ENCODE measurements at regions of chr12 and their contacts with region 1.

Region 1: DNA sequence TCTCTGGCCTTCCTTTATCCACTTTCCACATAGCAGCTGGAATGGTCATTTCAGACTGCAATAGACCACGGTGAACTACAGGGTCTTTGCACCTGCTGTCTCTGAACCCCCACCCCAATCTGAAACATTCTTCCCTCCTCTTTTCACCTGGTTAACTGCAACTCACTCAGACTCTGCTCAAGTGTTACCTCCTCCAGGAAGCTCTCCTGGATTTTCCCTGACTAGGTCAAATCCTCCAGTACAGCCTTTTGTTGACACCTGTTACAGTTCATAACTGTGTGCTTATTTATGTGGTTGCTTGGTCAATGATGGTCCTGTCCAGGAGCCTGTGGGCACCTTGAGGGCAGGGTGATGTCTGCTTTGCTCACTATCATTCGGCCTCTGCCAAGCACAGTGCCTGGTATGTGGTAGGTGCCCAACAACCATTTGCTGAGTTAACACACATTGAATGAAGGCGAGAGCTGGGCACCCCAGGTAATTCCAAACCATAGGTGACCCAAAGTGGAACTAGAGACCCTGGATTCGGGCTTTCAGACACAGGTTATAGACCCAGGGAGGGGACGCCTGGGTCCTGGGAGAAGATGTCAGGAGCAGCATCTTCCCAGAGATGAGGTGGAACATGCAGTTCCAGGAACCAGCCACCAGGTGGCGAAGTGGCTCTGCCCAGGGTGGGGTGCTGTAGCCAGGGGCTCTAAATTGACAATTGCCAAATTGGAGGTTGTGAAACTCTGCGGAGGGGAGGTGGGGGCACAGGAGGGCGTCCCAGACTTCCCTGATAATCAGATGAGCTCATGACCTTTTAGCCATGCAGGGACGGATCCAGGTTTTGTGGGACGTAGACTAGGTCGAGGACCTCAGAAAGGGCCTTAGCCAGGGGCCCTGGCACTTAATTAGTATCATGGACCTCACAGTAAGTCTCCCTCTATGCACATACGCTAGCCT is 28.1 kb downstream of the TRPV4 start:
- DNase-seq: peak; percentile 47 to 82 (median 72)
- ATAC-seq: peak; percentile 96
- H3K4me3 ChIP-seq: no peak overlapping the region
- H3K4me3 Mint-ChIP-seq: no peak overlapping the region
- H3K27ac ChIP-seq: no peak overlapping the region
- H3K27ac Mint-ChIP-seq: no peak overlapping the region
- H3K4me1 ChIP-seq: no peaks in the 10 kb centered on the region
- H3K4me1 Mint-ChIP-seq: no peaks in the 10 kb centered on the region
- H3K27me3 ChIP-seq: peaks cover 0 to 2% of the 10 kb centered on the region in 2 experiments
- H3K27me3 Mint-ChIP-seq: peaks cover 2% of the 10 kb centered on the region
- CTCF ChIP-seq: peak; percentile 98

Region 2: DNA sequence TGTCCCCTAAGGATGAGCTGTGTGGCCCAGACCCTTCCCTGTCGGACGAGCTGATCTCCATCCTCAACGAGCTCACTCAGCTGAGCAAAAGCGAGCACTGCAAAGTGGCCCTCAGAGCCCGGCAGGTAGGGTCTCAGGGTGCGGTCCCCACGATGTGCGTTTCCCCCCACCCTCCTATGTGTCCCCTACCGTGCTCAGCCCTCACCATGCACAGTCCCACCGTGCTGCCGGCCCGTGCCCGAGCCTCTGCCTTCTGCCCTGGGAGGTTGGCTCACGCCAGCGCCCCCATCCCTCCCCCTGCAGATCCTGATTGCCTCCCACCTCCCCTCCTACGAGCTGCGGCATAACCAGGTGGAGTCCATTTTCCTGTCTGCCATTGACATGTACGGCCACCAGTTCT is 582.6 kb before region 1 on chr12:
- CTCF ChIA-PET with region 1: no interaction called
- POLR2A ChIA-PET with region 1: no interaction called
- intact Hi-C with region 1: no loop called
- DNase-seq: no peak
- ATAC-seq: no peak
- H3K4me3 ChIP-seq: no peak overlapping the region
- H3K4me3 Mint-ChIP-seq: no peak overlapping the region
- H3K27ac ChIP-seq: no peak overlapping the region
- H3K27ac Mint-ChIP-seq: no peak overlapping the region
- H3K4me1 ChIP-seq: no peaks in the 10 kb centered on the region
- H3K4me1 Mint-ChIP-seq: no peaks in the 10 kb centered on the region
- H3K27me3 ChIP-seq: no peaks in the 10 kb centered on the region
- H3K27me3 Mint-ChIP-seq: no peaks in the 10 kb centered on the region
- CTCF ChIP-seq: no peak

Region 3: DNA sequence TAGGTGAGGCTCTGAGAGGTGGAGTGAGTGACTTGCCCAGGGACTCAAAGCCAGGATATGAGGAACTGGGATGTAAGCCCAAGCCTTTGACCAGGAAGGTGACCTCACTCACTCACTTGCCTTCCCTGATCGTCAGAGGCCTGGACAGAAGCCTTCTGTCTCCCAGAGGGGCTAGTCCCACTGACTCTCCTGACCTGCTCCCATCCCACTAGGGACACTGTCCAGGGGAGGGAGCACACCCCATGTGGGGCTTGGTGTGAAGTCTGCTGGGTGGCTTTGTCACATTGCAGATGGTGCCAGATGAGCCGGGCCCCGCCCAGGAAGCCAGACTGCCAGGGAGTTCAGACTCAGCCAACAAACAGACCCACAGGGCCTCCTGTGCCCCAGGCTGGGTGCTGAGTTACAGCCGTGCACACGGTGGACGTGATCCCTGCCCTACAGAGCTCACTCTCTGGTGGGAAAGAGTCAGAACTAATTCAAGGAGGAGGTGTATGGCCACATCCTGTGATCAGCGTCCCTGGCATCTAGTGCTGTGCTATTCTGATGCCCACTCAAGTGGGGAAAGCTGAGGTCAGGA is 260.0 kb before region 1 on chr12:
- CTCF ChIA-PET with region 1: no interaction called
- POLR2A ChIA-PET with region 1: no interaction called
- intact Hi-C with region 1: no loop called
- DNase-seq: peak in 3 of 9 experiments; percentile 30 to 54 (median 44)
- ATAC-seq: peak; percentile 29
- H3K4me3 ChIP-seq: no peak overlapping the region
- H3K4me3 Mint-ChIP-seq: no peak overlapping the region
- H3K27ac ChIP-seq: peak overlapping the region in 1 of 2 experiments; percentile 62
- H3K27ac Mint-ChIP-seq: no peak overlapping the region
- H3K4me1 ChIP-seq: peaks cover 7% of the 10 kb centered on the region
- H3K4me1 Mint-ChIP-seq: peaks cover 8% of the 10 kb centered on the region
- H3K27me3 ChIP-seq: no peaks in the 10 kb centered on the region
- H3K27me3 Mint-ChIP-seq: peaks cover 15% of the 10 kb centered on the region
- CTCF ChIP-seq: no peak

Region 4: GRCh38 chr12:109795023-109795422 is 10.1 kb before region 1 on chr12:
- CTCF ChIA-PET with region 1: interaction called, 20 read pairs
- POLR2A ChIA-PET with region 1: no interaction called
- intact Hi-C with region 1: no loop called
- DNase-seq: no peak
- ATAC-seq: no peak
- H3K4me3 ChIP-seq: no peak overlapping the region
- H3K4me3 Mint-ChIP-seq: no peak overlapping the region
- H3K27ac ChIP-seq: no peak overlapping the region
- H3K27ac Mint-ChIP-seq: no peak overlapping the region
- H3K4me1 ChIP-seq: no peaks in the 10 kb centered on the region
- H3K4me1 Mint-ChIP-seq: no peaks in the 10 kb centered on the region
- H3K27me3 ChIP-seq: no peaks in the 10 kb centered on the region
- H3K27me3 Mint-ChIP-seq: peaks cover 11% of the 10 kb centered on the region
- CTCF ChIP-seq: no peak

Region 5: DNA sequence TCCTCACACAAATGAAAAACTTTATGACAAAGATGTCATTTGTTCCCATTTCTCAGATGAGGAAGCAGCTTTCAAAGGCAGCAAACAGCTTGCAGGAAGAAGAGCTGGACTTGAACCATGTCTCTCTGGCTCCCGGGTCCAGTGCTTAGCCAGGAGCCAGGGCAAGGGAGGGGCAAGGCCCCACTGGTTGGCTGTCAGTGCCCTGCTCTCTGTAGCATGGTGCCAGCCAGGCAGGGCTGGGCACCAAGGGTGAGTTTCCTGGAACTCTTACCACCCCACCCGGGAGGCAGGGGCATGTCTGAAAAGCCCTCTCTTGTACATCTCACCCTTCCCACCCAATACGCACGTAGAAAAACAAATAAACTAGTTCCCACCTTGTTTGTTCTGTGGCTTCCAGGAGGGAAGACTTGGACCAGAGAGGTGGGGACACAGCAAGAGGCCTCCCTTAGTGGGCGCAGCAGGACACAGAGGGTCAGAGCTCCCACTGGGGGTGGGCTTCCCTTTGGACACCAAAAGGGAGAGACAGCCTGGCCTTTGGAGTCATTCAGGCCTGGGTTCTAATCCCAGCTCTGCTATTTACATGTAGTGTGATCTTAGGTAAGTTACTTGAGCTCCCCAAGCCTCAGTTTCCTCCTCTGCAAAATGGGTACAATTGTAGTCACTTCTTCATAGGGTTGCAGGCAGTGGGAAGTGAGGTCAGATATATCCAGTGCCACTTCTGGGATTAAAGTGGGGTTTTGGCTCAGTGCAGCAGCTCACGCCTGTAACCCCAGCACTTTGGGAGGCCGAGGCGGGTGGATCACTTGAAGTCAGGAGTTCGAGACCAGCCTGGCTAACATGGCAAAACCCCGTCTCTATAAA is 10.9 kb after region 1 on chr12:
- CTCF ChIA-PET with region 1: interaction called, 10 read pairs
- POLR2A ChIA-PET with region 1: no interaction called
- intact Hi-C with region 1: no loop called
- DNase-seq: no peak
- ATAC-seq: no peak
- H3K4me3 ChIP-seq: no peak overlapping the region
- H3K4me3 Mint-ChIP-seq: no peak overlapping the region
- H3K27ac ChIP-seq: no peak overlapping the region
- H3K27ac Mint-ChIP-seq: no peak overlapping the region
- H3K4me1 ChIP-seq: no peaks in the 10 kb centered on the region
- H3K4me1 Mint-ChIP-seq: no peaks in the 10 kb centered on the region
- H3K27me3 ChIP-seq: no peaks in the 10 kb centered on the region
- H3K27me3 Mint-ChIP-seq: peaks cover 11% of the 10 kb centered on the region
- CTCF ChIP-seq: no peak

Region 6: DNA sequence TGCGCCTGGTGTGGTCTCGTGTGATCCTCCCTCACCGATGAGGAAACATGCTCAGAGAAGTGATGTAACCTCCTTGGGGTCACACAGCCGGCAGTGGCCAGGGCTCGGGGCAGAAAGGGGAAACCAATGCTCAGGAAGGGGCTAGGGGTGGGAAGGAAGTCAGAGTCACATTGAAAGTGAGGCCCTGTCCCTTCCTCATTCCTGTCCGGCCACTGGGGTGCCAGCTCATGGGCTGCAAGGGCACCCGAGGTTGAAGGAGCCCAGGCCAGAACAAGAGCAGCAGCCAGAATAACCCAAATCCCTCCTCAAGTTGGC is 23.1 kb after region 1 on chr12:
- CTCF ChIA-PET with region 1: interaction called, 10 read pairs
- POLR2A ChIA-PET with region 1: no interaction called
- intact Hi-C with region 1: no loop called
- DNase-seq: peak in 1 of 9 experiments; percentile 47
- ATAC-seq: no peak
- H3K4me3 ChIP-seq: no peak overlapping the region
- H3K4me3 Mint-ChIP-seq: no peak overlapping the region
- H3K27ac ChIP-seq: no peak overlapping the region
- H3K27ac Mint-ChIP-seq: no peak overlapping the region
- H3K4me1 ChIP-seq: no peaks in the 10 kb centered on the region
- H3K4me1 Mint-ChIP-seq: no peaks in the 10 kb centered on the region
- H3K27me3 ChIP-seq: no peaks in the 10 kb centered on the region
- H3K27me3 Mint-ChIP-seq: peaks cover 26% of the 10 kb centered on the region
- CTCF ChIP-seq: no peak

Region 7: GRCh38 chr12:109844983-109845823 is 40.1 kb after region 1 on chr12:
- CTCF ChIA-PET with region 1: interaction called, 61 read pairs
- POLR2A ChIA-PET with region 1: no interaction called
- intact Hi-C with region 1: loop called (anchors 1 kb)
- DNase-seq: peak; percentile 73 to 92 (median 89)
- ATAC-seq: peak; percentile 100
- H3K4me3 ChIP-seq: peak overlapping the region; percentile 19 to 36
- H3K4me3 Mint-ChIP-seq: no peak overlapping the region
- H3K27ac ChIP-seq: no peak overlapping the region
- H3K27ac Mint-ChIP-seq: no peak overlapping the region
- H3K4me1 ChIP-seq: peaks cover 9% of the 10 kb centered on the region
- H3K4me1 Mint-ChIP-seq: peaks cover 3% of the 10 kb centered on the region
- H3K27me3 ChIP-seq: no peaks in the 10 kb centered on the region
- H3K27me3 Mint-ChIP-seq: no peaks in the 10 kb centered on the region
- CTCF ChIP-seq: peak; percentile 98

Region 8: GRCh38 chr12:109858764-109859163 is 53.7 kb after region 1 on chr12:
- CTCF ChIA-PET with region 1: interaction called, 13 read pairs
- POLR2A ChIA-PET with region 1: no interaction called
- intact Hi-C with region 1: no loop called
- DNase-seq: no peak
- ATAC-seq: no peak
- H3K4me3 ChIP-seq: no peak overlapping the region
- H3K4me3 Mint-ChIP-seq: no peak overlapping the region
- H3K27ac ChIP-seq: no peak overlapping the region
- H3K27ac Mint-ChIP-seq: no peak overlapping the region
- H3K4me1 ChIP-seq: peaks cover 2% of the 10 kb centered on the region
- H3K4me1 Mint-ChIP-seq: peaks cover 11% of the 10 kb centered on the region
- H3K27me3 ChIP-seq: no peaks in the 10 kb centered on the region
- H3K27me3 Mint-ChIP-seq: no peaks in the 10 kb centered on the region
- CTCF ChIP-seq: no peak

Region 9: DNA sequence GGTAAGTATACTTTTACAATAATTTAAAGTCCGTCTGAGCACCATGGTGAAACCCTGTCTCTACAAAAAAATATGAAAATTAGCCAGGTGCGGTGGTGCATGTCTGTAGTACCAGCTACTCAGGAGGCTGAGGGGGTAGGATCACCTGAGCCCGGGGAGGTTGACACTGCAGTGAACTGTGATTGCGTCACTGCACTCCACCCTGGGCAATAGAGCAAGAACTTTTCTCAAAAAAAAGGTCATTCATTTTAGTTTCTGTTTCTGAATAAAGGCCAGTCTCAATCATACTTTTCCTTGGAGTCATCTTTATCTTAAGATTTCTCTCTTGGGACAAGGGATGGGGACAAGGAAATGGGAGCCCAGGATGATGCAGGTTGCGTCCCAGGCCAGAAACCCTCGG is 207.0 kb after region 1 on chr12:
- CTCF ChIA-PET with region 1: no interaction called
- POLR2A ChIA-PET with region 1: no interaction called
- intact Hi-C with region 1: loop called (anchors 1 kb)
- DNase-seq: peak in 3 of 9 experiments; percentile 30 to 47 (median 33)
- ATAC-seq: peak; percentile 62
- H3K4me3 ChIP-seq: no peak overlapping the region
- H3K4me3 Mint-ChIP-seq: no peak overlapping the region
- H3K27ac ChIP-seq: no peak overlapping the region
- H3K27ac Mint-ChIP-seq: peak overlapping the region; percentile 76
- H3K4me1 ChIP-seq: peaks cover 12% of the 10 kb centered on the region
- H3K4me1 Mint-ChIP-seq: peaks cover 43% of the 10 kb centered on the region
- H3K27me3 ChIP-seq: no peaks in the 10 kb centered on the region
- H3K27me3 Mint-ChIP-seq: no peaks in the 10 kb centered on the region
- CTCF ChIP-seq: no peak